Activated B cell treated with CpG ODN at 0.5 μM for 24 hours (primary cell): ENCODE measurements at regions of chr17 and their contacts with region 1.

Region 1: DNA sequence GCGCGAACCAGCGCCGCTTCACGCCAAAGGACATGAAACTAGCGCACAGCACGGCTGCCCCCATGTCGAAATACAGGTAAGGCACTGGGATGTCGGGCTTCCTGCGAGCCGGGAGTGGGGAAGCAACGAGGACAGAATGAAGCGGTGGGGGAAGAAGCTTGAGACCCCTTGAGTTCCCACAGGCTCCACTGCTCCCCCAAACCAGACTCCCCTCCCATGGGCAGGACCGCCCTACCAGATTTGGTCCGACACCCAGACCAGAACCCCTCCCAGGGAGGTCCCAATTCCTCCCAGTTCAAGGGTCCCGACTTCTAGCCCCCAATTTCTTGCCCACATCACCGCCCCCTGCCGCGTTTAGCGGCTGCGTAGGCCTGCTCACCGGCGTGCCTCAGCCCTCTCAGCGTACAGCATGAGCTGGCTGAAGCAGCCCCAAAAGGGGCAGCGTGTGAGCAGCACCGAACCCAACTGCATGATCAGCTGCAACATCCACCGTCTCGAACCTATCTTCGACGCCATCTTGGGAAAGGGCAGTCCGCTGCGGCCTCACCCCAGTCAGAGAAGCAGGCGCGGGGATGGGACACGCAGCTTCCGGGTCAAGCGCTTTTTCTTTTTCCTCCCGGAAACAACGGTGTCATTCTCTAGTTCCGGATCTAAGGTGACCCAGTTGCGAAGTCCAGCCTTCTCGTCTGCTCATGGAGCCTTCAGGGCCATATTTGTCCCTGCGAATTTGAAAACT is at the start of gene TMEM101:
- DNase-seq: peak; percentile 67
- ATAC-seq: peak; percentile 98
- H3K4me3 Mint-ChIP-seq: peak within 1 kb of the TSS; percentile 100
- H3K27ac Mint-ChIP-seq: peak within 1 kb of the TSS; percentile 91
- H3K4me1 Mint-ChIP-seq: peaks cover 14% of the 10 kb centered on the region
- H3K27me3 Mint-ChIP-seq: no peaks in the 10 kb centered on the region
- CTCF ChIP-seq: no peak
- total RNA-seq, gene TMEM101: 23.0 and 24.6 TPM in 2 replicates

Region 2: GRCh38 chr17:44070455-44071197 is 56.0 kb after region 1 on chr17 and contains the start of gene G6PC3:
- CTCF ChIA-PET with region 1: no interaction called
- POLR2A ChIA-PET with region 1: interaction called, 16 read pairs
- intact Hi-C with region 1: loop called (anchors 1 kb)
- DNase-seq: peak; percentile 73
- ATAC-seq: peak; percentile 73
- H3K4me3 Mint-ChIP-seq: peak within 1 kb of the TSS; percentile 97
- H3K27ac Mint-ChIP-seq: peak within 1 kb of the TSS; percentile 95
- H3K4me1 Mint-ChIP-seq: peaks cover 44% of the 10 kb centered on the region
- H3K27me3 Mint-ChIP-seq: no peaks in the 10 kb centered on the region
- CTCF ChIP-seq: no peak
- total RNA-seq, gene G6PC3: 30.9 and 35.2 TPM in 2 replicates

Region 3: GRCh38 chr17:44503147-44504029 is 488.8 kb after region 1 on chr17 and contains the start of gene GPATCH8:
- CTCF ChIA-PET with region 1: no interaction called
- POLR2A ChIA-PET with region 1: interaction called, 3 read pairs
- intact Hi-C with region 1: loop called (anchors 10 kb)
- DNase-seq: peak; percentile 96
- ATAC-seq: peak; percentile 90
- H3K4me3 Mint-ChIP-seq: peak within 1 kb of the TSS; percentile 98
- H3K27ac Mint-ChIP-seq: peak within 1 kb of the TSS; percentile 95
- H3K4me1 Mint-ChIP-seq: peaks cover 38% of the 10 kb centered on the region
- H3K27me3 Mint-ChIP-seq: peaks cover 7% of the 10 kb centered on the region
- CTCF ChIP-seq: no peak
- total RNA-seq, gene GPATCH8: 62.2 and 64.5 TPM in 2 replicates